Testis (tissue), 5 donors: ENCODE measurements at regions of chr11 and their contacts with region 1.

Region 1: GRCh38 chr11:86218125-86219084 is 26.1 kb upstream of the EED start:
- DNase-seq: peak; percentile 75
- H3K4me3 ChIP-seq: peak overlapping the region in 1 of 2 donors; percentile 34
- H3K27ac ChIP-seq: no peak overlapping the region
- H3K4me1 ChIP-seq: peaks cover 3% of the 10 kb centered on the region
- H3K27me3 ChIP-seq: no peaks in the 10 kb centered on the region
- CTCF ChIP-seq: peak; percentile 70 to 77 (median 76)
- POLR2A ChIP-seq: no peak

Region 2: GRCh38 chr11:85867751-85868150 is 350.7 kb before region 1 on chr11:
- intact Hi-C with region 1: loop called (anchors 10 kb)
- DNase-seq: no peak
- H3K4me3 ChIP-seq: no peak overlapping the region
- H3K27ac ChIP-seq: no peak overlapping the region
- H3K4me1 ChIP-seq: no peaks in the 10 kb centered on the region
- H3K27me3 ChIP-seq: no peaks in the 10 kb centered on the region
- CTCF ChIP-seq: no peak
- POLR2A ChIP-seq: no peak

Region 3: DNA sequence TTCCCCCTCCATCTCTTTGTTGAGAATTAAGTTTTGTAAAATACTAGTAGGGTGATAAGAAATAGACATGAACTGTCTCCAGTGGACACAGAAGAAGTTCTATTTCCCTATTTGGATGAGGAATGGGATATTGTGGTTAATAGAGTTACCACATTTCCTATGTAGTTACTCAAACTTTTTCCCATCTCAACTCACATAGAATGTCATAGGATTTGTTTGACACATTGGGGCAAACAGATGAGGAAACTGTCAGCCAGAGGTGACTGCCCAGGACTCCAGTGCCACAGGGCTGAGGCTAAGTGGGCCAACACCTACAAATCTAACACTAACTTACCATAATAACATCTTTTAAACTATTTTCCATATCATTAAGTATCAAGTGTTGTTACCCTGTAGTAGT is 304.9 kb before region 1 on chr11:
- intact Hi-C with region 1: no loop called
- DNase-seq: no peak
- H3K4me3 ChIP-seq: no peak overlapping the region
- H3K27ac ChIP-seq: no peak overlapping the region
- H3K4me1 ChIP-seq: no peaks in the 10 kb centered on the region
- H3K27me3 ChIP-seq: no peaks in the 10 kb centered on the region
- CTCF ChIP-seq: no peak
- POLR2A ChIP-seq: no peak

Region 4: DNA sequence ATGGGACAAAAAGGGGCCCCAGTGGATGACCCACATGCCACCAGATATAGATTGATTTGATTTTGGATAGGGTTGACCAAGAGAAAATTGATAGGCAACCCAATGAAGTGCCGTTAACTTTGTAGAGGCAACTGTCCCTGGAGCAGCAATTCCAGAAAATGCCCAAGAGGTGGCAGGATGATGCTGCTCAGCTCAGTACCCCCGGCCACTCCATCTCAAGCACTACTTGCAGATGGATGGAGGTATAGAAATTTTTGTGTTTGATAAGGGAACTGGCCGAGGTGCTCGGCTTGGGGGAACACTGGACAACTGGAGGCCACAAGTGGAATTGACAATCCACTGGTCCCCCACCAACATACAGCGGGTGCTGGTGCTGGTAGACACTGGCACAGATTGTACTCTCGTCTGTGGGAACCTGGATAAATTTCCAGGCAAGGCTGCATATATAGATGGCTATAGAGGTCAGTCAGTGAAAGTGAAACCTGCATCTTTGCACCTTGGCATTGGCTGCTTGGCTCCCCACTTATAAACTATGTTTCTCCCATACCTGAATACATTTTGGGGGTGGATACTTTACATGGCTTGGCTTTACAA is 276.9 kb before region 1 on chr11:
- intact Hi-C with region 1: loop called (anchors 10 kb)
- DNase-seq: peak; percentile 76
- H3K4me3 ChIP-seq: no peak overlapping the region
- H3K27ac ChIP-seq: no peak overlapping the region
- H3K4me1 ChIP-seq: peaks cover 6% of the 10 kb centered on the region
- H3K27me3 ChIP-seq: no peaks in the 10 kb centered on the region
- CTCF ChIP-seq: peak; percentile 68 to 79 (median 74)
- POLR2A ChIP-seq: no peak

Region 5: GRCh38 chr11:86243396-86243795 is 25.0 kb after region 1 on chr11:
- intact Hi-C with region 1: no loop called
- DNase-seq: no peak
- H3K4me3 ChIP-seq: peak overlapping the region in 1 of 2 donors; percentile 84
- H3K27ac ChIP-seq: no peak overlapping the region
- H3K4me1 ChIP-seq: peaks cover 6% of the 10 kb centered on the region
- H3K27me3 ChIP-seq: no peaks in the 10 kb centered on the region
- CTCF ChIP-seq: no peak
- POLR2A ChIP-seq: no peak